Aorta (tissue), 5 donors: ENCODE measurements at regions of chr4 and their contacts with region 1.

Region 1: DNA sequence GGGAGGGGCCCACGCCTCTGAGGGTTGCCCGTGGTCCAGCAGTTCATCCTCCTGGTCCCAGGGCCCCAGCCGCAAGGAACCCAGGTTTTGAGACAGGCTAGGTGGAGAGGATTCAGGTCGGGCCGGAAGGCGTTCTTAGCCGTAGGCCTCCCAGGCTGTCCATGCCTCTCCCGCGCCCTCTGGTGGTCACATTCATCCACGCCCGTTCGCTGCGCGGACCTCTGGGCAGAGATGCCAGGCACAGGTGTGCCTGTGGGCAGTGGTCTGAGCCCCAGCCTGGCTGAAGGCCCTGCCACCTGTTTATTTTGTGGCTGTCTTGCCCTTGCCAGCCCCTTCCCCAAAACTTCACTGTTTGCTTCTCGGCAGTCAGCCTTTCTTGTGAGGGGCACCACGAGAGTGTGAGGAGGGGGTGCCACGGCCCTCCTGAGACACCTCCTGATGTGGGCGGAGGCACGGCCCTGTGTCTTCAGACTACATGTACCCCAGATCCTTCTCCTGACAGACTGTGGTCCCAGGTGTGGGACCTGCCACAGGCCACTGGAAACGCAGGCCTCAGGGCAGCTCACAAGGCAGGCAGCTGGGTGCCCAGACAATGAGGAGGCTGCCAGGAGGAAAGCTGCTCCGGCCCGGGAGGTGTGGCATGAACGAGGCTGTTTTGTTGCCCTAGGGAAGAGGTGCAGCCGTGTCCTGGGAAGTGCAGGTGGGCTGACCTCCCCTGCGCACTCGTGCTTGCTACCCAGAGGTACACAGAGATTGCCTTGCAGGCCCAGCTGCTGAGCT is 5.0 kb downstream of the UVSSA start:
- DNase-seq: peak; percentile 90 to 96
- ATAC-seq: peak; percentile 56
- H3K4me3 ChIP-seq: no peak overlapping the region
- H3K27ac ChIP-seq: no peak overlapping the region
- H3K4me1 ChIP-seq: no peaks in the 10 kb centered on the region
- H3K27me3 ChIP-seq: no peaks in the 10 kb centered on the region

Region 2: GRCh38 chr4:1130316-1131186 is 221.5 kb before region 1 on chr4:
- intact Hi-C with region 1: loop called (anchors 5 kb)
- DNase-seq: peak; percentile 70 to 90
- ATAC-seq: peak; percentile 96
- H3K4me3 ChIP-seq: no peak overlapping the region
- H3K27ac ChIP-seq: no peak overlapping the region
- H3K4me1 ChIP-seq: no peaks in the 10 kb centered on the region
- H3K27me3 ChIP-seq: no peaks in the 10 kb centered on the region

Region 3: DNA sequence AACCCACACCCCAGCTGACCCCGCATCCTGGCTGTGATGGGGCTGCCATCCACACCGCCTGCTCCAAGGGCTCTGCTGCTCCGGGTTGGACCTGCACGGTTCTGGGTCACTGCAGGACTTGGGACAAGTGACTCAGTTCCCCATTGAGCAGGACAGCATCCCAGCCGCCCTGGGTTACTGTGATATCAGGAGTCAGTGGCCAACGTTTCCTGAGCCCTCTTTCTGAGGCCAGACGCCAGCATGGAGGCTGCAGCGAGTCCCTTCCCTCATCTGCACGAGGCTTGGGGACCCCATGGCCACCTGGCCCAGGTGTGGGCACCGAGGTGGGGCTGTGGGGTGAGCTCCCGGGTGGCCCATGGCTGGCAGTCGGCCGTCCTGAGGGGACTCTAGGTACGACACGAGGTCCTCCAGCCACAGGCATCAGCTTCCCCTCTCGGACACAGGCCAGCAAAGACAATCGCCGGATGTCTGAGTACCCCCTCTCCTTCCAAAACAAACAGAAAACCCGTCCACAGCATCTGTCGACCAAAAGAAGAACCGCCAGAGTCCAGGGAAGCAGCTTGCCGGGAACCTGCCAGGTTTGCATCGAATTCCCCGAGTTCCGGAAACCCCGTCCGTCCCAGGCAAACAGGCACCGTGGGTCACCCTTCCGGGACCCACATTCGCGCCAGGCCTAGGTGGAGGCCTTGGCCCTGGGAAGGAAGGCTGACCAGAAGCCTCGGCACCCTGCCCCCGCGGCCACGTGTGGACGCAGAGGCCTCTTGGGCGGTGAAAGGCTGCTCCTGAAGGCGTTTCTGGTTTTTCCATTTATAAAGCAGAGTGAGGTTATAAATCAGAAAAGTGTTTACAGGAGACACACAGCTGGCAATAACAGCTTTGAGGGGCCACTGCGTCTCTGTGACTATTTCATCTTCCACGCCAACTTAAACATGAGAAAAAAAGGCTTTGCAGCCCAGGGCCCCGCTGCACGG is 196.1 kb after region 1 on chr4:
- intact Hi-C with region 1: loop called in 1 of 2 experiments (anchors 10 kb)
- DNase-seq: peak in 1 of 2 donors; percentile 59
- ATAC-seq: peak; percentile 71
- H3K4me3 ChIP-seq: peak overlapping the region in 1 of 2 donors; percentile 2
- H3K27ac ChIP-seq: no peak overlapping the region
- H3K4me1 ChIP-seq: no peaks in the 10 kb centered on the region
- H3K27me3 ChIP-seq: no peaks in the 10 kb centered on the region

Region 4: DNA sequence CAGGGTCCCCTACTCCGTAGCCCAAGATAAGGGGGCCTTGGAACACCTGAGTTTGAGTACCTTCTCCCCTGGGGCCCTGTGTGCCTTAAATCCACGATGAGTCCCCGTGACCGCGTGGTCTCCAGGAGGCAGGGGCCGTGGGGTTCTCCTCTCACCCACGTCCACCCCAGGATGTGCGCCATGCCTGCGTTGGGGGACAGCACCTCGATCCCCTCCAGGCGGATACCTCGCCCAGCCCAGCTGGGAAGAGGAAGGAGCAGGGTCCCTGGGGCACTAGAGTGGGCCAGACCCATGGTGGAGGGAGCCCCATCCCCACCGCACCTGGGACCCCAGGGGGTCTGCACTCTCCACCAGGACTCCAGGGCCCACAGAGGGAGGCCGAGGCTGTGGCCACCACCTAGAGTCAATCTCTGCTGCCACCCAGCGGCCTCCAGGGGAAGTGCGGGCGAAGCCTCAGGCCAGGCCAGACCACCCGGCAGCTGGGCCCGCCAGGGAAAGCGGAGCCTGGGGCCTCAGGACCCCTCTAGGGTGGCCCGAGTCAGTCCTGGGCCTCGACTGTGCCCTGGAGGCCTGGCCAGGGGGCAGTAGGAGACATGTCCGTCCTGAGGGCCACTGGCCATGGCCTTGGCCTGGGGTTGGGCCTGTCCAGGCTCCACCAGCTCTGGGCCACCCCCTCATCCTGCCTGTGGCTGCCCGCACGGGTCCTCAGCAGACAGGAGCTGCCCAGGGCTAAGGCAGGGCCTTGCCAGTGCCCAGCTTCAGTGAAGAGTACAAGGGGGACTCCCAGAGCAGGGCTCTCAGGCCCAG is 277.1 kb after region 1 on chr4:
- intact Hi-C with region 1: loop called (anchors 1 to 5 kb)
- DNase-seq: peak; percentile 74 to 89
- ATAC-seq: peak; percentile 85
- H3K4me3 ChIP-seq: no peak overlapping the region
- H3K27ac ChIP-seq: no peak overlapping the region
- H3K4me1 ChIP-seq: no peaks in the 10 kb centered on the region
- H3K27me3 ChIP-seq: no peaks in the 10 kb centered on the region

Region 5: GRCh38 chr4:1721004-1721665 is 369.1 kb after region 1 on chr4 and contains the starts of genes TACC3 and TMEM129:
- intact Hi-C with region 1: loop called in 1 of 2 experiments (anchors 10 kb)
- DNase-seq: peak; percentile 95
- ATAC-seq: peak; percentile 93
- H3K4me3 ChIP-seq: peak within 1 kb of the TSS; percentile 34 to 39
- H3K27ac ChIP-seq: peak within 1 kb of the TSS in 1 of 2 donors; percentile 86
- H3K4me1 ChIP-seq: no peaks in the 10 kb centered on the region
- H3K27me3 ChIP-seq: no peaks in the 10 kb centered on the region
- total RNA-seq, gene TACC3: 7.6 to 16.1 TPM
- total RNA-seq, gene TMEM129: 24.9 to 26.6 TPM